Left ventricle myocardium inferior (tissue), 1 donor: ENCODE measurements at regions of chr10 and their contacts with region 1.

Region 1: DNA sequence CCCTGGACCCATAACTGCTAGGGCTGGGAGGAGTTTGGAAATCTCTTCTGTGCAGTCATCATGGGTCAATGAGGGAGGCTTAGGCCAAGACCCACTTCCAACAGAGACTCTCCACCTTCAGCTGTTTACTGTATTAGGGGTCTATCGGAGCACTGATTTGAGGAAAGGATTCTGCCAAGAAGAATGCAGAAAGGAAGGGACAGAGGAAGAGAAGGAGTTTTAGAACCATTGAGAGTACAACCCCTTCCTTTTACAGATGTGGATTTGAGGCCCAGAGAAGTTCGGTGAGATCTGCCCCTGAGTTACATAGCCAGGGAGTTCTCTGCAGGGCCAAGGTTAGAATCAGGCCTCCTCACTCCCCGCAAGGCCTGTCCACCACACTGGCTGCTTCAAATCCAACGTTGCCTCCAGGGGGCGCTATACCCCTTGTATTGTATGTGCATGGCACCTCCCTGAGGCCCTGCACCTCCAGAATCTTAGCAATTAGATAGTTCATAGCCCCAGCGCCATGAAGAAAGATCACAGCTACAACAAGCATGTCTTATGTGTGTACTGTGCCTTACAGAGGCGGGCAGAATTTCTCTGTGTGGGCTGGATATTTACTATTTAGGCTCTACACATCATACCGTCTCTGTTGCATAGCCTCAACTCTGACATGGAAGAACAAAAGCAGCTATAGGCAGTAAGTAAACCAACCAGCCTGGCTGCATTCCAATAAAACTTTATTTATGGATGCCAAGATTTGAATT is 246.8 kb downstream of the SKIDA1 start:
- DNase-seq: peak; percentile 93
- H3K4me3 ChIP-seq: no peak overlapping the region
- H3K27ac ChIP-seq: peak overlapping the region; percentile 51
- H3K4me1 ChIP-seq: peaks cover 4% of the 10 kb centered on the region
- H3K27me3 ChIP-seq: no peaks in the 10 kb centered on the region
- CTCF ChIP-seq: peak; percentile 83

Region 2: DNA sequence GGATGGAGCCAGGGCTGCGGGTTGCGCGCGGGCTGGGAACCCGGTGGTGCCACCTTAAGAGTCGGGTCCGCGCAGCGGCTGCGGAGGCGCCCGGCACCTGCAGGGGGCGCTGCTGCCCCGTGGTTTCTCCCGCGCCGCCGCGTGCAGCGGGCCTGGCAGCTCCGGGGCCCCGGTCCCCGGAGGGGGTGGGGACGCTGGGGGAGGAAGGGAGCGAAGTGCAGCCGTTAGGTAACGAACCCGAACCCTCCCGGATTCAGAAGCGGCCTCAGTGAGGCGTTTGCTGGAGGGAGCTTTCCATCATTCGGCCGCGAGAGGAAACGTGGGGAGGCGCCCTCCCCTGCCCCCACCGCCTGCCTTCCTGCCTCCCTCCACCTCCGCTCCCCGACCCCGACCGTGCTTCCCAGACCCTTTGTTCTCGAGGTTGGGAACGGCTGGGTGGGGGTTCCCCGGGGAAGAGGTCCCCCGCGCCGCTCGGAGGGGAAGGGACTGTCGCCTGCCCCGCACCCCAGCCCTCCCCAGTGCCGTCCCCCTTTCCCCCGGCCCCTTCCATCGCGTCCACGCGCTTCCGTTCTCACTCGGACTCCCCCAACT is 217.2 kb after region 1 on chr10:
- intact Hi-C with region 1: loop called (anchors 10 kb)
- DNase-seq: peak; percentile 85
- H3K4me3 ChIP-seq: peak overlapping the region; percentile 88
- H3K27ac ChIP-seq: peak overlapping the region; percentile 85
- H3K4me1 ChIP-seq: peaks cover 39% of the 10 kb centered on the region
- H3K27me3 ChIP-seq: no peaks in the 10 kb centered on the region
- CTCF ChIP-seq: peak; percentile 99

Region 3: GRCh38 chr10:21599582-21599981 is 320.9 kb after region 1 on chr10:
- intact Hi-C with region 1: no loop called
- DNase-seq: no peak
- H3K4me3 ChIP-seq: no peak overlapping the region
- H3K27ac ChIP-seq: no peak overlapping the region
- H3K4me1 ChIP-seq: peaks cover 22% of the 10 kb centered on the region
- H3K27me3 ChIP-seq: no peaks in the 10 kb centered on the region
- CTCF ChIP-seq: no peak